Activated CD4-positive, alpha-beta memory T cell treated with anti-CD3 and anti-CD28 coated beads for 36 hours (primary cell): ENCODE measurements at regions of chr16 and their contacts with region 1.

Region 1: DNA sequence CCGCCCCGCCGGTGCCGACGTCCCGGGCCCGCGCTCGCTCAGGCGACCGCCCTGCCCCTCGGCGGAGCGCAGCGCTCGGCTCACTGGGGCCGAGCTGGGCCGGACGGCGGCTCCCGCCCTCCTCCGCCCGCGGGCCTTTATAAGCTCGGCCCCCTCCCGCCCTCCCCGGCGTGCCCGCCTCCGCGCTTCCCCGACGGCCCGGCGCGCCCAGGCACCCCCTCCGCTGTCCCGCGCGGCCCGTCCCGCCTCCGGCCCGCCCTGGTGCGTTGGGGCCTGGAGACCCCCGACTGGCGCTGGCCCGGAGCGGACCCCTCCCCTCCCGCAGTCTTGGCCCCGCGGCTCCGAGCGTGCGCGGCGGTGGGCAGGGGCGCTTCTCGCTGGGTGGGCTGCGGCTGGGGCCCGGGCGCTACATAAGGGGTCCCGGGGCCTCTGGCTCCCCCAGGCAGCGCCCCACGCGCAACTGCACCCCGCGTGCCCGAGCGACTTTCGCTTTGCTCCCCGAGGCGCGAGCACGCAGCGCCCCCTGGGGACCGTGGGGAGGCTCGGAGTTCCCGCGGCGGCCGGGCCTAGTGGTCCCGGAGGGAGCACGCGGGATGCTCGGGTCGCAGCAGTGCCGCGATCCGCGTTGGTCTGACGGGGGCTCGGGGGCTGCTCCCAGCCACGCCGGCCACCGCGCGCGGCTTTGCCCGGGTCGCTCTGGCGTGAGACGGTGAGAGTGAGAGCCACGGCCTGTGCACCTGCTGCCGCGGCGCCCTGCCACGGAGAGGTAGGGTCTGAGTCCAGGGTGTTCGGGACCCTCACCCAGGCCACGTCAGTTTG is at the start of gene PIEZO1:
- DNase-seq: peak; percentile 80
- H3K4me3 Mint-ChIP-seq: peak within 1 kb of the TSS; percentile 80
- H3K27ac Mint-ChIP-seq: peak within 1 kb of the TSS; percentile 89
- H3K4me1 Mint-ChIP-seq: peaks cover 37% of the 10 kb centered on the region
- H3K27me3 Mint-ChIP-seq: no peaks in the 10 kb centered on the region
- total RNA-seq, gene PIEZO1: 221 to 234 TPM

Region 2: DNA sequence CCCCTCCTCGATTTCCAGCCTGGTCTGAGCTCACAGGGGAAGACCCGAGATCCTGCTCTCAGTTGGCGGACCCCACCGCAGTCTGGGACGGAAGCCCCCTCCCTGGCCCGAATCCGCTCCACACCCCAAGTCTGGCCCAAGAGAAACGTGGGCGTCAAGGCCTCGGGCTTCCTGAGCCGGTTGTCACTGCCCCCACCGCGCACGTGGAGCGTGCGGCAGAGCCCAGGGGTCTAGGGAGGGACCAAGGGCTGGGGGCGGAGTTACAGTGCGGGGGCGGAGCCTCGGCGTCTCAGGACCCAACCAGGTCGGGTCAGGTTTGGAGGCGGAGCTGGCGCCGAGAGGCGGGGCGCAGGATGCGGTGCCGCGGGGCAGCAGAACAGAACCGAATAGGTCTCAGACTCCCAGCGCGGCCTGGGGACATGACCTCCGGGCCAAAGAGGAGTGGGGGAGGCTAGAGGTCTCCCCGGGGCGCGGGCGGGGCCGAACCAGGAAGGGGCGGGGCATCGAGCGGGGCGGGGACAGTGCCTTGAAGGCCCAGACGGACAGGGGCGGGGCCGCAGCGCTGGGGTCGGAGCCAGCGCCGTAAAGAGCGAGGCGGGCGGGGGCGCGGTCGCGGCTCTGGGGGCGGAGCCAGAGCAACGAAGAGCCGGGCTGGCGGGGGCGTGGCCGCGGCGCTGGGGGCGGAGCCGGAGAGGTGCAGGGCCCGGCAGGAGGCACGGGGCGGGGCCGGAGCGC is 332.7 kb before region 1 on chr16:
- CTCF ChIA-PET with region 1: no interaction called
- POLR2A ChIA-PET with region 1: no interaction called
- intact Hi-C with region 1: loop called (anchors 5 kb)
- DNase-seq: peak; percentile 99
- H3K4me3 Mint-ChIP-seq: peak overlapping the region; percentile 80
- H3K27ac Mint-ChIP-seq: peak overlapping the region; percentile 84
- H3K4me1 Mint-ChIP-seq: peaks cover 25% of the 10 kb centered on the region
- H3K27me3 Mint-ChIP-seq: no peaks in the 10 kb centered on the region

Region 3: DNA sequence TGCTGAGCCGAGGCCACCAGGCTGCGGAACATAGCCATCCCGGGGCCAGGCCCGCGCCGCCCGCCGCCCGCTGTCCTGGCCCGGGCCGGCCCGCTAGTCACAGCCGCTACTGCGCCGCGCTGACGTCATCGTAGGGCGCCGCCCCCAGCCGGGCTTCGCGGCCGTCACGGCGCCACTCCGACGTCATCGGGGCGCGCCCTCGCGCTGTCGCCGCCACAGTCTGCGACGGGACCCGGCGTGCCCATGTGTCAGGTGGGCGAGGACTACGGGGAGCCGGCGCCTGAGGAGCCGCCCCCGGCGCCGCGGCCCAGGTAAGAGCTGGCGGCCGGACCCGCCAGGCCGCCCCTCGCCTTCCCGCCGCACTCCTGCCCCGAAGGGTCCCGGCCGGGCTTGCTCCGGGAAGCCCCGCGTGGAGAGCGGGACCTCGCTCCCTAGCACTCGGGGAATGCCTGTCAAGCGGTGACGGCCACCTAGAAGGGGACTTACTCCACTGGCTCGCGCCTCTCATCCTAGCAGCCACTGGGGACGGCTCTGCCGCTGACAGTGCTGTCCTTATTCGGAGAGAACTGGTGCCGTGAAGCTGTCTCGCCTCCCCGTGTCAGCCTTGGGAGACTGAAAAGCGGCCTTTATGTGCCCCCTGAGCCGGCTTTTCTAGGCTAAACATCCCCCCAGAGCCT is 78.9 kb before region 1 on chr16 and contains the starts of genes CTU2 and RNF166:
- CTCF ChIA-PET with region 1: interaction called, 5 read pairs
- POLR2A ChIA-PET with region 1: interaction called, 6 read pairs
- intact Hi-C with region 1: loop called (anchors 1 kb)
- DNase-seq: peak; percentile 94
- H3K4me3 Mint-ChIP-seq: peak within 1 kb of the TSS; percentile 82
- H3K27ac Mint-ChIP-seq: peak within 1 kb of the TSS; percentile 91
- H3K4me1 Mint-ChIP-seq: peaks cover 47% of the 10 kb centered on the region
- H3K27me3 Mint-ChIP-seq: no peaks in the 10 kb centered on the region
- total RNA-seq, gene CTU2: 38.0 to 41.6 TPM
- total RNA-seq, gene RNF166: 46.4 to 55.6 TPM

Region 4: GRCh38 chr16:88803264-88803987 is 18.1 kb after region 1 on chr16 and contains the start of gene CDT1:
- CTCF ChIA-PET with region 1: interaction called, 18 read pairs
- POLR2A ChIA-PET with region 1: interaction called, 81 read pairs
- intact Hi-C with region 1: loop called (anchors 1 kb)
- DNase-seq: peak; percentile 90
- H3K4me3 Mint-ChIP-seq: peak within 1 kb of the TSS; percentile 84
- H3K27ac Mint-ChIP-seq: peak within 1 kb of the TSS; percentile 91
- H3K4me1 Mint-ChIP-seq: peaks cover 27% of the 10 kb centered on the region
- H3K27me3 Mint-ChIP-seq: no peaks in the 10 kb centered on the region
- total RNA-seq, gene CDT1: 169 to 183 TPM

Region 5: GRCh38 chr16:88856828-88857733 is 71.8 kb after region 1 on chr16 and contains the starts of genes GALNS and TRAPPC2L:
- CTCF ChIA-PET with region 1: interaction called, 19 read pairs
- POLR2A ChIA-PET with region 1: interaction called, 8 read pairs
- intact Hi-C with region 1: no loop called
- DNase-seq: peak; percentile 99
- H3K4me3 Mint-ChIP-seq: peak within 1 kb of the TSS; percentile 93
- H3K27ac Mint-ChIP-seq: peak within 1 kb of the TSS; percentile 72
- H3K4me1 Mint-ChIP-seq: peaks cover 23% of the 10 kb centered on the region
- H3K27me3 Mint-ChIP-seq: no peaks in the 10 kb centered on the region
- total RNA-seq, gene GALNS: 22.0 to 24.1 TPM
- total RNA-seq, gene TRAPPC2L: 63.6 to 71.5 TPM